ENCODE measurements at regions of chr15 and their contacts with region 1.

Region 1: GRCh38 chr15:86743283-86743903 is 663.7 kb downstream of the AGBL1 start:
- DNase-seq: peak; percentile 54

Region 2: GRCh38 chr15:86231864-86232721 is 511.3 kb before region 1 on chr15:
- CTCF ChIA-PET with region 1: interaction called, 29 read pairs
- POLR2A ChIA-PET with region 1: no interaction called
- DNase-seq: peak; percentile 56

Region 3: DNA sequence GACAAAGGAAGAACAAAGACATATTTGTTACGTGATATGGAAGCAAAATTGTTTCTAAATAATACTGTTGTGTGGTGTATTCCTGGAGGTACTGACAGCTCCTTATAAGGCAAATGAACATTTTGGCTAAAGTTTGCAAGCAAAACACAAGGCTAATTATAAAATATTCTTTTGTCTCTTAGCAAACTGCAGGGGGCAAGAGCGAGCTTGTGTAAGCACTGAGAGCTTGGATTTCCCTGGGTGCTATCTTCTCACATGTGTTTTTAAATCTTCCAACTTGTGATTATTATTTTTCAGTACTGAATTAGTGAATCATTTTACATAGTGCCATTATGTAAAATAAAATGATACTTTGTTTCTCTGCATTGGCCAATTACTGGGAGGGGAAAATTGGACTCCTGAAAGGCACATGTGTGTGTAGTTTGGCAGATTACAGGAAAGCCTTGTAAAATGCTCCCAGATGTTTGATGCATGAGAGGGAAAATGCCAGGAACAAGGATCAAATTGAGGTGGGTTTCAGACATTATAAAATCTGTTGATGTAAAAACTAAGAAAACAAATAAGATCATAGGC is 52.2 kb before region 1 on chr15:
- CTCF ChIA-PET with region 1: no interaction called
- POLR2A ChIA-PET with region 1: no interaction called
- DNase-seq: no peak

Region 4: DNA sequence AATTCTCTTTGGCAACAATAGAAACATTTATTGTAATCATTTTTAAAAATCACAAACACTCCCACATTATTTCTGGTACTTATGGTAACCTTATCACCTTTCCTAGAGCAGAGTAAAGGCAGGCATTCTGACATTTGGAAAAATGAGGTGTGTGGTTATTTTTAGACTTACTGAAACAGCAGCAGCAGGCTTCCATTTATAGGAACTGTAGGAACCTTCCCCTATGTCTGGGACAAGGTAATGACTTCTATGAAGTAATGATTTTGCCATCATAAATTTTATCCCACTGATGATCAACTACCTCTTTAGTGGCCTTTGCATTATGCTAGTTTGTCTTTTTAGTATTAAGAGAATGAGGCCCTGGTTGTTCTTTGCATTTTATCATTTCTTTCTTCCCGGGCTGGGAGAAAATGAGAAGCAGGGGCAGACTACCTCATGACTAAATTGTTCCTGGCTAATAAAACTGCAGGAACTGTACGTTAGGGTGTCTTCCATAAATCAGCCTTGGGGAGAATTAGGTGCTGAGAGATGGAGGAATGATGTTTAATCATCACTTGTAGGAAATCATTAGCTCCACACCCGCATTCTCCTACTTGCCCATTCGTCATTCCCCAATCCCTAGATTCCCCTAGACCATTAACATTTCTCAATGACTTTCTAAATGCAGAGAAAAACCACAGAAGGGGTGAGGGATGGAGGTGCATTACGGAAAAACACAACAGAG is 16.6 kb after region 1 on chr15:
- CTCF ChIA-PET with region 1: no interaction called
- POLR2A ChIA-PET with region 1: no interaction called
- DNase-seq: no peak